ENCODE measurements at regions of chr1 and their contacts with region 1.

Region 1: GRCh38 chr1:212291505-212292134 is 6.4 kb downstream of the PPP2R5A start:
- DNase-seq: no peak
- ATAC-seq: peak; percentile 55
- H3K4me3 Mint-ChIP-seq: no peak overlapping the region
- H3K27ac Mint-ChIP-seq: peak overlapping the region; percentile 4
- H3K4me1 Mint-ChIP-seq: peaks cover 74% of the 10 kb centered on the region
- H3K27me3 Mint-ChIP-seq: no peaks in the 10 kb centered on the region
- CTCF ChIP-seq: peak; percentile 58

Region 2: DNA sequence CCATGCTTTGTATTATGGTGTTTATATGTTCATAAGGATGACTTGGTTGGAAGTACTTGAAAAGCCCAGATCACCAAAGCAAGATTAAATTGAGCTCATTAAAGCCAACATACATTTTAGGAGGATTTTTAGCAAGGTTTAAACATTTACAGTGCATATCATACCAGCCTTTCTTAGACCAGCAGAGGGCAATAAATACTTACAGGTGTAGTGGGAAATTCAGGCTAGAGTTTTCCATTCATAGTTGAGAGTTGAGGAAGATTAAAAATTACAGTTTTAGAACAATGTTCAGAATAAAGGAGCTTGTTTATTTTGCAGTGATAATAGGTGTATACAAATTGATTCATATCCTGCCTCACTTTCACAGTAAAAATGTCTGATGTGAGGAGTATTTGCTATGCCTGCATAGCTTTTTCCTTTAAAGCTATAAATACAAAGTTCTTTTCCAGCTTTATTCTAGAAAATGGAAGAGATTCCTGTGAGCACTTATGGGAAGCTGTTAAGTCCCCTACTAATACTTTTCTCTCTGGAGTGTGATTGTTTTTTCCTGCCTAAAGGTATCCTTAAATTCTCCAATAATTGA is 220.8 kb before region 1 on chr1:
- CTCF ChIA-PET with region 1: interaction called, 17 read pairs
- POLR2A ChIA-PET with region 1: no interaction called
- intact Hi-C with region 1: no loop called
- DNase-seq: no peak
- ATAC-seq: peak; percentile 42
- H3K4me3 Mint-ChIP-seq: no peak overlapping the region
- H3K27ac Mint-ChIP-seq: no peak overlapping the region
- H3K4me1 Mint-ChIP-seq: no peaks in the 10 kb centered on the region
- H3K27me3 Mint-ChIP-seq: no peaks in the 10 kb centered on the region
- CTCF ChIP-seq: peak; percentile 36

Measured in activated CD8-positive, alpha-beta T cell treated with anti-CD3 and anti-CD28 coated beads for 36 hours (primary cell).